Activated CD4-positive, alpha-beta T cell treated with anti-CD3 and anti-CD28 coated beads, Interleukin-2, amount 10 ng/mL, durations not matched to agents 24 days and 14 days (primary cell): ENCODE measurements at regions of chr6 and their contacts with region 1.

Region 1: GRCh38 chr6:128259730-128260685 is 260.4 kb downstream of the PTPRK start:
- DNase-seq: no peak
- H3K4me3 Mint-ChIP-seq: peak overlapping the region; percentile 48
- H3K27ac Mint-ChIP-seq: peak overlapping the region; percentile 69
- H3K4me1 Mint-ChIP-seq: peaks cover 22% of the 10 kb centered on the region
- H3K27me3 Mint-ChIP-seq: peaks cover 2% of the 10 kb centered on the region

Region 2: DNA sequence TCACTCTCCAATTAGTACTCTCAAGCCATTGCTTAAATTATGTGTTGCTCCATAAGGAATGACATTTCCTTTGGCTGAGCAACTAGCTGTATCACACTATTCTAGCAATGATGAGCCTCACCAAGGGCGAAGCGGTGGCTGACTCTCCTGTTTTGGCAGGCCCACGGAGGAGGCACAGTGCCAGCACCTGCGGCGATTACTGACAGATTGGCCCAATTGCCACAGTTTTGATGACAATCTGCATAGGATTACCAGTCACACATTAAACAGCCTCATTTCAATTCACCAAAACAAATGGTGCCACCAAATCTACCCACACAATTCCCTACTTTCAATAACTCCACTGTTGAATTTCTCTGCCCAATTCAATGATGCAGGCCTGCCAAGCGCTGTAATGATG is 26.5 kb before region 1 on chr6:
- intact Hi-C with region 1: no loop called
- DNase-seq: no peak
- H3K4me3 Mint-ChIP-seq: no peak overlapping the region
- H3K27ac Mint-ChIP-seq: no peak overlapping the region
- H3K4me1 Mint-ChIP-seq: no peaks in the 10 kb centered on the region
- H3K27me3 Mint-ChIP-seq: no peaks in the 10 kb centered on the region

Region 3: GRCh38 chr6:128275030-128275429 is 15.0 kb after region 1 on chr6:
- intact Hi-C with region 1: loop called (anchors 2 kb)
- DNase-seq: no peak
- H3K4me3 Mint-ChIP-seq: no peak overlapping the region
- H3K27ac Mint-ChIP-seq: no peak overlapping the region
- H3K4me1 Mint-ChIP-seq: peaks cover 8% of the 10 kb centered on the region
- H3K27me3 Mint-ChIP-seq: peaks cover 4% of the 10 kb centered on the region

Region 4: DNA sequence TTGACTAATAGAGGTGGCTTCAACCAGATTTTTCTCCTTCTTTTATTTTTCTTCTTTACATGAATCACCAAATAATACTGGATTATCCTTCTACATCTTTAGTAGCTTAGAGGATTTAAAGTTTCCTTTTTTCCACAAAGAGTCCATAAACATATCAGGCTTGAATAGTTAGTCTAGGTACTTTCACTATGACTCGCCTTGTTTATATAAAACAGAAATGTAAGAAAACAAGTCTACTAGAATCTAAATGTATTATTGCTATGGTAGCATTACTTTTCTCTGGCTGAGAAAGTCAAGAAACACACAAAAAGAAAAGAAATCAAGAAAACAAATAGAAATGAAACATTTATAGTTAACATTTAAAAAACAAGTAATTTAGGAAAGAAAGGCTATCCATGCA is 45.2 kb after region 1 on chr6:
- intact Hi-C with region 1: no loop called
- DNase-seq: no peak
- H3K4me3 Mint-ChIP-seq: no peak overlapping the region
- H3K27ac Mint-ChIP-seq: no peak overlapping the region
- H3K4me1 Mint-ChIP-seq: peaks cover 2% of the 10 kb centered on the region
- H3K27me3 Mint-ChIP-seq: no peaks in the 10 kb centered on the region